Activated B cell treated with CpG ODN at 0.5 μM for 24 hours (primary cell): ENCODE measurements at regions of chr7 and their contacts with region 1.

Region 1: DNA sequence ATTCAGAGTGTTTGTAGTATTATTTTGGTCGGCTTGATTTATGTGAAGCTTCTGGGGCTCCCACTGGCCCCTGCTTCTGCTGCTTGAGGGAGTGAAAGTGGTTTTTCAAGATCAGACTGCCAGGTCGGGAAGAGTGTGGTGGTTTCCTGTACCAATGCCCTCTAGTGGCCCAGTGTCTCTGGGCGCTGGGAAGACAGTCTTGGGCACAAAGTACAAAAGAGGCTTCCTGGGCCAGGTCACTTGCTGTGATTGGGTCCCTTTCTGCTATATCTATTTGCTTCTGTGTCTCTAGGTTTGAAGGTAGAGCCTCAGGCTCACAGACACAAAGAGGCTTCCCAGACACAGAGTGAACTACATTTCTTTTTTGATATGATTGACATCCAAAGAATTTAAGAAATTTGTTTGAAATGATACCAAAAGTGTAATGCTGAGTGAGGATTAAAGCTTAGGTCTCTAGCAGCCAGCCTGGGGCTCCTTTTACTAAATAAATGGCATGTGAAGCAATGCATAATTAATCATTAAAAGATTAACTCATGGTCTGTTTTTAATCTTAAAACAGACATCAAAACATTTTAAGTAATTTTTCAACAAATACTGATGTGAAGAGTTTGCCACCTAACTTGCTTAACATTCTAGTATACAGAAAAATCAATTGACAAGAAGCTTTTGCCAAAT is 36.3 kb downstream of the ABCB1 start:
- DNase-seq: no peak
- ATAC-seq: peak; percentile 72
- H3K4me3 Mint-ChIP-seq: no peak overlapping the region
- H3K27ac Mint-ChIP-seq: no peak overlapping the region
- H3K4me1 Mint-ChIP-seq: peaks cover 5% of the 10 kb centered on the region
- H3K27me3 Mint-ChIP-seq: no peaks in the 10 kb centered on the region
- CTCF ChIP-seq: no peak

Region 2: GRCh38 chr7:87445897-87446296 is 118.5 kb before region 1 on chr7:
- CTCF ChIA-PET with region 1: no interaction called
- POLR2A ChIA-PET with region 1: no interaction called
- intact Hi-C with region 1: loop called (anchors 5 kb)
- DNase-seq: no peak
- ATAC-seq: peak; percentile 74
- H3K4me3 Mint-ChIP-seq: no peak overlapping the region
- H3K27ac Mint-ChIP-seq: peak overlapping the region; percentile 38
- H3K4me1 Mint-ChIP-seq: peaks cover 11% of the 10 kb centered on the region
- H3K27me3 Mint-ChIP-seq: no peaks in the 10 kb centered on the region
- CTCF ChIP-seq: no peak

Region 3: GRCh38 chr7:87506246-87507180 is 57.9 kb before region 1 on chr7:
- CTCF ChIA-PET with region 1: interaction called, 3 read pairs
- POLR2A ChIA-PET with region 1: no interaction called
- intact Hi-C with region 1: loop called (anchors 5 kb)
- DNase-seq: no peak
- ATAC-seq: no peak
- H3K4me3 Mint-ChIP-seq: no peak overlapping the region
- H3K27ac Mint-ChIP-seq: peak overlapping the region; percentile 30
- H3K4me1 Mint-ChIP-seq: peaks cover 29% of the 10 kb centered on the region
- H3K27me3 Mint-ChIP-seq: no peaks in the 10 kb centered on the region
- CTCF ChIP-seq: no peak

Region 4: GRCh38 chr7:88291398-88292173 is 727.2 kb after region 1 on chr7:
- CTCF ChIA-PET with region 1: no interaction called
- POLR2A ChIA-PET with region 1: no interaction called
- intact Hi-C with region 1: no loop called
- DNase-seq: no peak
- ATAC-seq: no peak
- H3K4me3 Mint-ChIP-seq: no peak overlapping the region
- H3K27ac Mint-ChIP-seq: no peak overlapping the region
- H3K4me1 Mint-ChIP-seq: no peaks in the 10 kb centered on the region
- H3K27me3 Mint-ChIP-seq: no peaks in the 10 kb centered on the region
- CTCF ChIP-seq: no peak